ENCODE measurements at regions of chr14 and their contacts with region 1.

Region 1: GRCh38 chr14:25132732-25133422 is 82.9 kb upstream of the STXBP6 start:
- DNase-seq: peak; percentile 67 to 74
- H3K4me3 ChIP-seq: no peak overlapping the region
- H3K27ac ChIP-seq: no peak overlapping the region
- H3K4me1 ChIP-seq: peaks cover 22% of the 10 kb centered on the region in 2 donors
- H3K27me3 ChIP-seq: no peaks in the 10 kb centered on the region
- CTCF ChIP-seq: peak; percentile 70 to 93 (median 83)
- POLR2A ChIP-seq: no peak

Region 2: GRCh38 chr14:24806061-24806678 is 326.7 kb before region 1 on chr14:
- intact Hi-C with region 1: loop called (anchors 5 kb)
- DNase-seq: peak; percentile 82 to 86
- H3K4me3 ChIP-seq: no peak overlapping the region
- H3K27ac ChIP-seq: no peak overlapping the region
- H3K4me1 ChIP-seq: peaks cover 5 to 18% of the 10 kb centered on the region in 2 donors
- H3K27me3 ChIP-seq: no peaks in the 10 kb centered on the region
- CTCF ChIP-seq: peak; percentile 55 to 93 (median 82)
- POLR2A ChIP-seq: no peak

Region 3: GRCh38 chr14:25049568-25050268 is 83.2 kb before region 1 on chr14 and contains the start of gene STXBP6:
- intact Hi-C with region 1: loop called (anchors 10 kb)
- DNase-seq: peak; percentile 86 to 87
- H3K4me3 ChIP-seq: peak within 1 kb of the TSS; percentile 72 to 81 (median 77)
- H3K27ac ChIP-seq: peak within 1 kb of the TSS; percentile 70 to 95 (median 86)
- H3K4me1 ChIP-seq: peaks cover 25 to 26% of the 10 kb centered on the region in 2 donors
- H3K27me3 ChIP-seq: no peaks in the 10 kb centered on the region
- CTCF ChIP-seq: no peak
- POLR2A ChIP-seq: peak in 1 of 2 donors; percentile 80
- total RNA-seq, gene STXBP6: 44.1 to 120 (median 67.4) TPM

Region 4: DNA sequence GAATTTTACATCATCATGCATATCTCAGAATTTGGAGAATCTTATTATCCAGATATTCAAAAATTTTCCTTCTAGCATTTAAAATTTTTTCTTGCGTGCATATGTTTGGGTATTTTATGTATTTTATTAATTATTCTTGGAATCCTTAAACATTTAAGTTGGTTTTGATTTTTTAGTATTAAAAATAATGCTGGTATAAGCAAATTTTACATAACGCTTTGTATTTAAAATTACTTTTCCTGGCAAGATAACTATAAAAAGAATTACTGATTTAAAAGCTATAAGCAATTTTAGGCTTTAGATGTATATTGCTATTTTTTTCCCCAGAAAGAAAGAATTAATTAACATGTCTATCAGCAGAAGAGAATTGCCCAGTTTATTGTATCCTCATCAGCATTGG is 141.7 kb after region 1 on chr14:
- intact Hi-C with region 1: no loop called
- DNase-seq: no peak
- H3K4me3 ChIP-seq: no peak overlapping the region
- H3K27ac ChIP-seq: no peak overlapping the region
- H3K4me1 ChIP-seq: no peaks in the 10 kb centered on the region
- H3K27me3 ChIP-seq: no peaks in the 10 kb centered on the region
- CTCF ChIP-seq: no peak
- POLR2A ChIP-seq: no peak

Measured in thyroid gland (tissue), 4 donors.